ENCODE measurements at regions of chr19 and their contacts with region 1.

Region 1: DNA sequence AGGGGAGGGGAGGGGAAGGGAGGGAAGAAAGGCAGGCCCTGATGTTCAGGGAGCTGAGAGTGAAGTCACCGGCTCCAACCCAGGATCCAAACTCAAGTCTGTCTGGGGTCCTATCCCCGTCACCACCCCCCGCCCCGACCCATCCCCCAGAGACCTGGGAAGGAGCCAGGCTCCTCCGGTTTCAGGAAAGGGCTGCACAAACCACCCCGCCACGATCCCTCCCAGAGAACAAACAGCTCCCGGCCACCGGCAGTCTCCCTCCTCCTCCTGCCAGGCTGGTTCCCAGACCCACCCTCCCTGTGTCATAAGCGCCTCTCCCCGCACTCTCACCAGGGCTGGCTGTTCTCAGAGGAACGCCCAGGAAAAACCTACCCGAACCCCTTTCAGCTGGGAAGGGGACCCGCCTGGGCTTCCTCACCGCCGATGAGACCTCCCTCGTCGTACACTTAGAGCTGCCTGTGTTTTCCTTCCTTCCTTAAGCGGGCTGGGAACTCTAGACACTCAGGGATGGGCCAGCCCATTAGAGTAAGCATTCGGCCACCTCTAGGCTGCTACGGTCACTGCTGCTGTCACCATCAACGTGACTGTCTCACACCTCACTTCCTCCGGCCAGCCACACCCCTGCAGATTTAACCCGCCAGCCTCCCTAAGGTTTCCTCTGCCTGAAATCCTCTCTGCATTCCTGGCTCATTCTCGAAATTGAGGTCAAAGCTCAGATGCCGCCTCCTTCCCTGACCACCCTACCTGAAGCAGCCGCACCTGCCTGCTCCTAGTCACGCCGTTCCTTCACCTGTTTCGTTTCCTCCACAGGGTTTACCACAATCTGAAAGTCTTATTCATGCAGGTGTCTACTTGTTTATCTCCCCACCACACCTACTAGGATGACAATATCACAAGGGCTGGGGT is 6.3 kb upstream of the RDH13 start:
- DNase-seq: no peak
- ATAC-seq: peak; percentile 75
- H3K4me3 ChIP-seq: peak overlapping the region; percentile 23 to 55 (median 30); a peak in 5 of 6 replicates
- H3K27ac ChIP-seq: no peak overlapping the region
- H3K4me1 ChIP-seq: peaks cover 15% of the 10 kb centered on the region
- H3K27me3 ChIP-seq: peaks cover 2 to 35% of the 10 kb centered on the region in 2 experiments
- CTCF ChIP-seq: no peak
- EP300 ChIP-seq: no peak
- POLR2A ChIP-seq: no peak
- RAD21 ChIP-seq: no peak

Region 2: GRCh38 chr19:55053735-55054134 is 15.5 kb before region 1 on chr19:
- CTCF ChIA-PET with region 1: no interaction called
- POLR2A ChIA-PET with region 1: no interaction called
- in situ Hi-C with region 1: no loop called
- intact Hi-C with region 1: no loop called
- DNase-seq: no peak
- ATAC-seq: no peak
- H3K4me3 ChIP-seq: no peak overlapping the region
- H3K27ac ChIP-seq: no peak overlapping the region
- H3K4me1 ChIP-seq: no peaks in the 10 kb centered on the region
- H3K27me3 ChIP-seq: no peaks in the 10 kb centered on the region
- CTCF ChIP-seq: no peak
- EP300 ChIP-seq: no peak
- POLR2A ChIP-seq: no peak
- RAD21 ChIP-seq: no peak

Region 3: DNA sequence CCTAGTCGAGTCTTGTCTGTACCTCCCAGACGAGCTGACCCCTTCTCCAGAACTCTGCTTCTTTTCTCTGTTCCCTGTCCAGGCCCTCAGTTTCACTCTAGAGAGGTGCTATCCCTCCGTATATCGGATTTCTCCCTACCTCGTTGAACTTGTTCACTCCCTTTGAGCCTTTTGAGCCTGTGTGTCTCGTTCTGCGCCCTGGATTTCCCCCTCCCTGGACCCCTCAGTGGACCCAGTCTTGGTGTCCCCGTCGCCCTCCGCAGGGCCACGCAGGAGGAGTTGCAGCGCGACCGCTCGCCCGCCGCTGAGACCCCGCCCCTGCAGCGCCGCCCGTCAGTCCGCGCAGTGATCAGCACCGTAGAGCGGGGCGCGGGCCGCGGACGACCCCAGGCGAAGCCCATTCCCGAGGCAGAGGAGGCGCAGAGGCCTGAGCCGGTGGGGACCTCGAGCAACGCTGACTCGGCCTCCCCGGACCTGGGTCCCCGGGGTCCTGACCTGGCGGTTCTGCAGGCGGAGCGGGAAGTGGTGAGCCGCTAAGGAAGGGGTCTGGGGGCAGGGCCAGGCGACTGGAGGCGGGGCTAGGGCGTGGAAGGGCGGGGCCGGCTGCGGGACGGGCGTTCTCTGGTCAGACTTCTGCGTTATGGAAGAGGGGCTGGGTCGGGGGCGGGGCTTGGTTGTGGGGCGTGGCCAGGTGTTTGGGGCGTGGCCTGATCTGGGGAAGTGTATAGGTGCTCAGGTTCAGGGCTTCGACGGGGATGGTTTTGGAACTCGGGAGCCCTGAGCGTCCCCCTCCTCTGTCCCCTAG is 12.0 kb after region 1 on chr19:
- CTCF ChIA-PET with region 1: no interaction called
- POLR2A ChIA-PET with region 1: interaction called, 11 read pairs
- in situ Hi-C with region 1: no loop called
- intact Hi-C with region 1: no loop called
- DNase-seq: peak; percentile 53
- ATAC-seq: peak; percentile 77
- H3K4me3 ChIP-seq: peak overlapping the region; percentile 58 to 83 (median 69)
- H3K27ac ChIP-seq: no peak overlapping the region
- H3K4me1 ChIP-seq: peaks cover 22% of the 10 kb centered on the region; the same call in 1 of the 2 replicates
- H3K27me3 ChIP-seq: peaks cover 1 to 12% of the 10 kb centered on the region in 2 experiments; a peak in 2 of 5 replicates
- CTCF ChIP-seq: peak; percentile 43
- EP300 ChIP-seq: no peak
- POLR2A ChIP-seq: peak in 1 of 2 experiments; percentile 52; a peak in 2 of 4 replicates
- RAD21 ChIP-seq: 0 out of 2 replicates have a peak, but pooled peaks have one; percentile 12

Region 4: DNA sequence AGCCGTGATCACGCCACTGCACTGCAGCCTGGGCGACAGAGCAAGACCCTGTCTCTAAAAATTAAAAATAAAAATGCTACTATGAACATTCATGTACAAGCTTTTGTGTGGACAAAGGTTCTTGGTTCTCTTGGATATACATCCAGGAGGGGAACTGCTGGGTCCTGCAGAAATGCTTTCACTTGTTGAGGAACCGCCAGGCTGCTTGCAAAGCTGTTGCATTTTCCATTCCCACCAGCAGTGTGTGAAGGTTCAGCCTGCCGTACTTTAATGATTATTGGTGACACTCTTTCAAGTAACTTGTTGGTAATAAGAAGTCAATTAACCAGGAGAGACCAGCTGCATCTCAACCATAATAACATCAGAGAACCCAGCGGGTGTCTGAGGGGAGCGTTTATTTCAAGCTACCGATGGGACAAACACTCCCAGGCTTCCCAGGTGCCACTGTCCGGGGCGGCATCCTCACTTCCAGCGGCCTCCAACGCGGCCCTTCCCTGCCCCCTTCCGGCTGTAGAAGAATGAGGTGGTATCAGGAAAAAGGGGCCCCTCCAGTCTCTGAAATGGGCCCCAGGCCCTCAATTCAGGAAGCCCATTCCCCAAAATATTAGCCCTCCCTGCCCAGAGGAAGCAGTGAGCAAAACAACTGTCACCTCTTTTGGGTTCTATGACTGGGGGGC is 63.4 kb after region 1 on chr19:
- CTCF ChIA-PET with region 1: no interaction called
- POLR2A ChIA-PET with region 1: no interaction called
- in situ Hi-C with region 1: no loop called
- intact Hi-C with region 1: no loop called
- DNase-seq: no peak
- ATAC-seq: peak; percentile 91
- H3K4me3 ChIP-seq: peak overlapping the region in 2 of 3 experiments; percentile 28 to 46; a peak in 3 of 6 replicates
- H3K27ac ChIP-seq: no peak overlapping the region
- H3K4me1 ChIP-seq: no peaks in the 10 kb centered on the region
- H3K27me3 ChIP-seq: peaks cover 0 to 26% of the 10 kb centered on the region in 2 experiments; a peak in 1 of 5 replicates
- CTCF ChIP-seq: peak; percentile 73
- EP300 ChIP-seq: no peak
- POLR2A ChIP-seq: no peak
- RAD21 ChIP-seq: peak; percentile 35; the same call in 1 of the 2 replicates